Prostate gland (tissue), 2 donors: ENCODE measurements at regions of chr17 and their contacts with region 1.

Region 1: DNA sequence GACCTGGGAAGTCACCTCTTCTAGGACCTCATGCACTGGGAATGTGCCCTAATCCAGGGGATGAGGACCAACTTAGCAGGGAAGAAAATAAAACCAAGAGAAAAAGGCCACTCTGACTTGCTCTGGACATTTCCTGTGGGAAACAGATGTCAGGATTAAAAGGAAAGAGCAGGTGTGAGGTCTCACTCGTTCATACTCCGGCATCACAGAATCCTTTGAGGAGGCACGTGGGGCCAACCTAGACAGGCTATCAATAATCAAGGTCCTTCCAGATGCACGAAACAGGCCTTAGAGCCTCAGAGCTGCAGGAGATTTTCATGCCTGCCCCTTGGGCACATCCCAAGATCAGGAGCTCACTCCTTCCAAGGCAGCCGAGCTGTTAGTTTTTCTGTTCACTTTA is 321.5 kb upstream of the CCL2 start:
- DNase-seq: no peak
- H3K4me3 ChIP-seq: no peak overlapping the region
- H3K27ac ChIP-seq: no peak overlapping the region
- H3K4me1 ChIP-seq: no peaks in the 10 kb centered on the region
- H3K27me3 ChIP-seq: no peaks in the 10 kb centered on the region
- CTCF ChIP-seq: no peak
- POLR2A ChIP-seq: no peak

Region 2: GRCh38 chr17:33981711-33982601 is 48.4 kb after region 1 on chr17:
- intact Hi-C with region 1: loop called (anchors 10 kb)
- DNase-seq: no peak
- H3K4me3 ChIP-seq: no peak overlapping the region
- H3K27ac ChIP-seq: no peak overlapping the region
- H3K4me1 ChIP-seq: no peaks in the 10 kb centered on the region
- H3K27me3 ChIP-seq: no peaks in the 10 kb centered on the region
- CTCF ChIP-seq: no peak
- POLR2A ChIP-seq: no peak